Caco-2 (cell line): ENCODE measurements at regions of chr5 and their contacts with region 1.

Region 1: DNA sequence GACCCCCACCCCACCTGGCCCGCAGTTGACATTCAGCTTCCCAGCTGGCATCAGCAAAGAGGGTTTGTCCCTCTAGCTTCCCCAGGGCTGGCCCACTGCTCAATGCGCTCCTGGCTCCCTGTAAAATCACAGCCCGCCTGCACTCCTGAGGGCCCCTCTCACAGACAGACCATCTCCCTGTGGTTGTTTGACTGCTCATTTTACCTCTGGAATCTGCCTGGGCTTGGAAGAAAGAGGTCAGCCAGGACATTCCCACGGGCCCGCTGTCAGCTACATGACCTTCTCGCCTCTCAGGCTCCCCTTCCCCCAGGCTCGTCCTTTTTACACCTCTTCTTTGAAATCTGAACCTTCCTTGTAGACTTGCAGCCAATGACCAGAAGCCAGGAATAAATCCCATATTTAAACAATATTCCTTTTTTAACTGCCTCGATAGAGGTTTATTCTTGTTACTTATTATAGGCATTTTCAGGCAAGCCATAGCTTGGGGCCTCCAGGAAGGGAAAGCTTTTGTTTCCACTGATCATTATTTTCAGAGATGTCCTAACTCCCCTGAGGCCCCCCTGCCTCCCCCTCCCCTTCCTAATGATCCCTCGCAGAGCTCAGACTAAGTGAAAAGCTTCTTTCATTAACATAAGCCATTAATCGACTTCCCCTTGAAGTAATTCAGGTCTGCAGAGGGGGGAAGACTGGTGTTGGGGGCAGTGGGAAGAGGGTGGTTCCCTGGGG is 76.3 kb upstream of the IQGAP2 start:
- DNase-seq: peak in 1 of 2 experiments; percentile 46
- H3K4me3 ChIP-seq: no peak overlapping the region
- H3K4me3 Mint-ChIP-seq: no peak overlapping the region
- H3K27ac Mint-ChIP-seq: peak overlapping the region; percentile 81
- H3K4me1 ChIP-seq: peaks cover 62% of the 10 kb centered on the region
- H3K4me1 Mint-ChIP-seq: peaks cover 42% of the 10 kb centered on the region
- H3K27me3 ChIP-seq: no peaks in the 10 kb centered on the region; the same call in 1 of the 2 replicates
- H3K27me3 Mint-ChIP-seq: no peaks in the 10 kb centered on the region
- CTCF ChIP-seq: no peak

Region 2: DNA sequence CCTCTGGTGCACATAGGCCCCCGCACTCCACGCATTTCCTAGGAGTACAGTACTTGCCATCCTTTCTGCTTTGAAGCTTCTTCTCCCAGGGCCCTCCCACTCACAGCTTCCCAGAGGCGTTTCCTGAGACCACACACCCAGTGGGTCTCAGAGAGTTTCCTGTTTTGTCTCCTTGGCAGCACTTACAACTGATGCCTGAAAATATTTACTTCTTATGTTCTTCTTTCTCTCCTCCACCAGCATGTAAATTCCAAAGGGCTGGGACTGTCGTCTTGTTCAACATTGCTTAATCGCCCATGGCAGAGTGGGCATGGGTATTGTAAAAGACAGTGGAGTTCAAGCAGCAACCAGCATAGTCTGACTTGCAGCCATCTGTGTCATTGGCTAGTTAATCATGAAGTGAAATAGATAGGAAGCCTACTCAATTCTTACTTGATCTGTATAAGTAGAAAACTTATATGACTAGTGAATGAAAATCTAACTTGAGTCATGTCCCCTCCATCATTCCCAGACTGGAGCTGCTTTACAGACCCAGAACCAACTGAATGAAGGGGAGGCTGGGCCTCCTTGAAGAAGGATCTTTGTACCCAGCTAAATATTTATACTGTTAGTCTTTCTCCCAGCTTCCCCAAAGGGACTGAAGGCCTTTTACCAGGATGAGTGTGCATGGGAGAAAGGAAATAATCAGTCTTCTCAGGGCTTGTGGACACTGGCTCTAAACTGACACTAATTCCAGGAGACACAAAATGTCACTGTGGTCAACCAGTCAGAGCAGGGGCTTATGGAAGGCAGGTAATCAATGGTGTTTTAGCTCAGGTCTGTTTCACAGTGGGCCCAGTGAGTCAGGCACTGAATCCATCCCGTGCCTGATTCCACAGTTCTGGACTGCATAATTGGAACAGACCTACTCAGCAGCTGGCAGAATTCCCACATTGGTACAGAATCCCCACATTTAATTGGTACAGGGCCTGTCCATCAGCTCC is 127.1 kb before region 1 on chr5:
- CTCF ChIA-PET with region 1: no interaction called
- POLR2A ChIA-PET with region 1: no interaction called
- intact Hi-C with region 1: no loop called
- DNase-seq: no peak
- H3K4me3 ChIP-seq: no peak overlapping the region
- H3K4me3 Mint-ChIP-seq: no peak overlapping the region
- H3K27ac Mint-ChIP-seq: no peak overlapping the region
- H3K4me1 ChIP-seq: no peaks in the 10 kb centered on the region
- H3K4me1 Mint-ChIP-seq: no peaks in the 10 kb centered on the region
- H3K27me3 ChIP-seq: no peaks in the 10 kb centered on the region
- H3K27me3 Mint-ChIP-seq: peaks cover 19% of the 10 kb centered on the region
- CTCF ChIP-seq: no peak

Region 3: GRCh38 chr5:76537073-76537543 is 210.4 kb after region 1 on chr5:
- CTCF ChIA-PET with region 1: no interaction called
- POLR2A ChIA-PET with region 1: interaction called, 10 read pairs
- intact Hi-C with region 1: no loop called
- DNase-seq: peak in 1 of 2 experiments; percentile 37
- H3K4me3 ChIP-seq: no peak overlapping the region
- H3K4me3 Mint-ChIP-seq: no peak overlapping the region
- H3K27ac Mint-ChIP-seq: peak overlapping the region; percentile 18
- H3K4me1 ChIP-seq: peaks cover 74% of the 10 kb centered on the region
- H3K4me1 Mint-ChIP-seq: peaks cover 46% of the 10 kb centered on the region
- H3K27me3 ChIP-seq: no peaks in the 10 kb centered on the region
- H3K27me3 Mint-ChIP-seq: no peaks in the 10 kb centered on the region
- CTCF ChIP-seq: no peak